ENCODE measurements at regions of chr1 and their contacts with region 1.

Region 1: DNA sequence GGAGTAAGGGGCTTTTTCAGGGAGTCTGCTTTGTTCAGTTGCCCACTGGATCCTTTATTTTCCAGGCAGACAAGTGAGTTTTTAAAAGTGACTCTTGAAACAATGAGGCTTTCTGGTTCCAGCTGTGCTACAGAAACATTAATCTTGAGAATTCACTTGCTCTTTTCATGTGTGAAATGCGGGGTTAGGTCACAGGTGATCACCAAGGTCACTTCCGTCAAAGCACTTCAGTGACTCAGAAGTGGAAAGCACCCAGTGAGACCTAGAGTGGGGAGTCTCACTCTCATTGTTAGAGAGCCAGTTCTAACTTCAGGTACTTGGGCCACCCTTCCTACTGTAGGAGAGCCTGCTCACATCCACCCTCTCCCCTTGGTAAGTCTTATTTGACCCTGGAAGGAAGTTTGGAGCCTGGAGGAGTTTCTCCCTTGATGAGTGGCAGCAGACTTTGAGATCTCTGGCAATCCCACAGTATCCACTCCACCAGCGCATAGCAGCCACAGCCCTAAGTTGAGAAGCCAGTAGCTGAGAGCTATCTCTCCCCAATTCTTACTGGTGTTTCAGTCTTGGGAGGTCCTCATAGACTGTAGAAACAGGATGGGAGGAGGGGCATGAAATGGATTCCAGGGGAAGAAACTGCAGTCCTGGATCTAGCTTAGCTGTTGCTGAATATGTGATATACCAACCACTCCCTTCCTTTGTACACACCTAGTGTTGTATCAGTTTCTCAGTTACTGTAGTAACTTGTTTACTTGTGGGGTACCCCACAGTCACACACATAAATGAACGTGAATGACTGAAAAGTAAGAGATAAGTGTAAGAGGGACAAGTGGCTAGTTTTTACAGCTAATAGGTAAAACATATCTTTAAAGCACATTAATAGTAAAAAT is 3.1 kb downstream of the TACSTD2 start:
- DNase-seq: peak; percentile 87
- H3K4me3 Mint-ChIP-seq: peak overlapping the region; percentile 49
- H3K27ac Mint-ChIP-seq: peak overlapping the region; percentile 52
- H3K4me1 Mint-ChIP-seq: peaks cover 35% of the 10 kb centered on the region
- H3K27me3 Mint-ChIP-seq: peaks cover 75% of the 10 kb centered on the region

Region 2: DNA sequence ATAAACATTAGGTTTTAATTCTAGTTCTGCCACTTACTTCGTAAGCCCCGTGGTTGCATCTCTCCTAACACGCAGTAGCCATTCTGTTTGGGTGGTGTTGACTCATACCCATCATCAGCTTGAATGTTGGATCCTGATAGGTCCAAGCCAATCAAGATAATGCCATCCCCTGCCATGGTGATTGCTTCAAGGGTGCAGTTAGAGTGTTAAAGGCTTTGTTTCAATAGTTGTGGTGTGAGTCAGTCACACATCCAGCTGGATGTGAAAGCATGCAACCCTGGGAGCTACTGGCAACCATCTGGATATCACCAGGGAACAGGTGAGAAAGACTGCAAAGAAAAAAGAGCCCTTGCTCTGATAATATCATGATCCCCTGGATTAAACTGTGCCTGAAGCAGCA is 96.6 kb before region 1 on chr1:
- intact Hi-C with region 1: no loop called
- DNase-seq: no peak
- H3K4me3 Mint-ChIP-seq: no peak overlapping the region
- H3K27ac Mint-ChIP-seq: no peak overlapping the region
- H3K4me1 Mint-ChIP-seq: no peaks in the 10 kb centered on the region
- H3K27me3 Mint-ChIP-seq: no peaks in the 10 kb centered on the region

Region 3: DNA sequence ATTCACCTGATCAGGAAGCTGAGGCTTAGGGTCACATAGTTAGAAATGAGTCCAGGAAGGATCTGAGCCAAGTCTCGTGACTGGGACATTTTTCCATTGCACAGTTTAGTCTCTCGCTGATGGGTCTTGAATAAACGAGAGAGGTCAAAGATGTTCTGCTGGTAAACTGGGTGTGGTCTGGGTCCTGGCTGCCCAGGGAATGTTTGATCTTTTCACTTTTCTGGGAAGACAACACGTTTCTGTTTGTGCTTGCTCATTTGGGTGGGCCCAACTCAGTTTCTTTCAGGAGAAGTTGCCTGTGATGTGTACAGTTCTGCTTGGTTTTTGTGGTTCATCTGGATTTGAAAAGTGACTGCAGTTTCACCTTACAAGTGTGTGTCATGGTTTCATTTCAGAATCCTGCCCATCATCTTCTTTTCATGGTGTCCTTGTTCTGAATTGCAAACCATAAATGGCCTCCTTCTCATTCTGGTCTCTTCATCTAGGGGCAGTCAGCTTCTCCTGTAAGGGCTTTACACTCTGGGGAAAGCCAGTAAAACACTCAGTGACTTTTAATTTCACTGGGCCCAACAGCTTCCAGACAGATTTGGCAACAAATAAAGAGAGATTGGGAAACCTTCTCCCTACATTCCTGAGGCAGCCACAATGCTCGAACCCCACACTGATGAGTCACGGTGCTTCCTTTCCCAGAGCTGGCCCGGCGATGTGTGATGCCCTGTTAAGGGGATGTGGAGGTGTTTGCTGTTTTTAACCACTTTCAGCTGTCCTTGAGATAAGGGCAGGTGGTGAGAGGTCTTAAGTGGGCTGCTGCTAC is 10.3 kb after region 1 on chr1:
- intact Hi-C with region 1: loop called (anchors 1 kb)
- DNase-seq: no peak
- H3K4me3 Mint-ChIP-seq: peak overlapping the region; percentile 27
- H3K27ac Mint-ChIP-seq: peak overlapping the region; percentile 34
- H3K4me1 Mint-ChIP-seq: peaks cover 17% of the 10 kb centered on the region
- H3K27me3 Mint-ChIP-seq: peaks cover 54% of the 10 kb centered on the region

Region 4: DNA sequence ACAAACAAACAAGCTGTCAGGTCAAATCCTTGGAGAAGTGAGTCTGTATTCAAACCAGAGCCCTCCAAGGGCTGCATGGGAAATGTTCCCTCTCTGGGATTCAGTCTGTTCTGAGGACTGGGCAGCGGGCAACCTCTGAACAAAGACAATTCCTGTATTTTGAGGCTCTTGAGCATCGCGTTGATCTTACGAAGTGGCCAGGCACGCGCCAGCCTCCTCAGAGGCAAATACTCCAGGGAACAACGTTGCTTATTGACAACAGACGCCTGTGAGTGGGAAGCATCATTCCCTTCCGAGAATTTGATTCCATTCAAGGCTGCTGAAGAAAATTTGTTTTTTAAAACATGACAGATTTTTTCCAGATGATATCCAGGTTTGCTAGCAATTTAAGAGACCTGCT is 23.1 kb after region 1 on chr1:
- intact Hi-C with region 1: no loop called
- DNase-seq: no peak
- H3K4me3 Mint-ChIP-seq: no peak overlapping the region
- H3K27ac Mint-ChIP-seq: no peak overlapping the region
- H3K4me1 Mint-ChIP-seq: no peaks in the 10 kb centered on the region
- H3K27me3 Mint-ChIP-seq: peaks cover 56% of the 10 kb centered on the region

Region 5: DNA sequence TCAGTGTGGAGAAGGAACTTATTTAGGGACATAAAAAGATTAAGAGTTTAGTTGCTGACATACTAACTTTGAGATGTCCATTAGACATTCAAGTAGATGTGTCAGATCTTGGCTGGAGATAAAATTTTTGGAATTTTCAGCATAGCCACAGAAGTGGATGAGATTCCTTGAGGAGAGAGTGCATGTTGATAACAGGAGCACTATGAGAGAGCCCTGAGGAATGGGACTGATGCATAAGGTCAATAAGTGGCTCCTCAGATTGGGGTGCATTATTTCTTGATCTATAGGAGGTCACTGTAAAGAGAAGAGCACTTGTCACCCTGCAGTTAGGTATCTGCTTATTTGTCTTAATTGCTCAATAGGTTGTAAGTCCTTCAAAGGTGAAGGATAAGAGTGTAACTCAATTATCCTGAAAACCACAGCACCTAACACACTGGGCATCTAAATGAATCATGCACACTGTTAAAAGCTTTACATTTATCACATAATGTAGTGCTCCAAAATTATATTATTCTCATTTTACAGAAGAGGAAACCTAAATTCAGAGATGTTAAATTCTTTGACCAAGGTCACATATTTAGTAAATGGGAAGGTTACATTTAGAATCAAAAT is 55.1 kb after region 1 on chr1:
- intact Hi-C with region 1: no loop called
- DNase-seq: no peak
- H3K4me3 Mint-ChIP-seq: no peak overlapping the region
- H3K27ac Mint-ChIP-seq: no peak overlapping the region
- H3K4me1 Mint-ChIP-seq: no peaks in the 10 kb centered on the region
- H3K27me3 Mint-ChIP-seq: peaks cover 24% of the 10 kb centered on the region